ENCODE measurements at regions of chr2 and their contacts with region 1.

Region 1: GRCh38 chr2:210002158-210003157 is at the start of gene RPE:
- DNase-seq: peak; percentile 76
- ATAC-seq: peak; percentile 96
- H3K4me3 ChIP-seq: peak within 1 kb of the TSS; percentile 92
- H3K27ac ChIP-seq: peak within 1 kb of the TSS; percentile 82
- H3K4me1 ChIP-seq: peaks cover 10% of the 10 kb centered on the region
- H3K27me3 ChIP-seq: no peaks in the 10 kb centered on the region
- CTCF ChIP-seq: no peak
- EP300 ChIP-seq: no peak
- POLR2A ChIP-seq: peak; percentile 86
- RAD21 ChIP-seq: no peak
- polyA plus RNA-seq, gene RPE: 45.9 to 49.8 TPM

Region 2: DNA sequence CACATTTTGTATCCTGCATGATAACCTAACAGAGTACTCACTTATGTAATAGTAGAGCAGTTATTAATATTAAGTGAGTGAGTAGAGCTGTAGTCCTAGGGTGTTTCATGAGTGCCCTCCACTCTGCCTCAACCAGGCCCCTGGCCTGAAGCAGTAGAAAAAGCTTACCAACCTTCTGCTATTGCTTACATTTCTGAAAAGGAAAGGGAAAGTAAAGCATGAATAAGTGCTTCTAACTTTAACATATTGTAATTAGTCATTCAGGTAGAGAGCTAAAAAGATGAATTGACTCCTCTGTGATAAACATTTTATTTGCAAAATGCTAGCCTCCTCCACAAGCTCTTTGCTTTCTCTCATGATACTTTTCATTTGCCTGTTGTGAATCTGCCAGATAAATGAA is 94.7 kb before region 1 on chr2:
- CTCF ChIA-PET with region 1: no interaction called
- POLR2A ChIA-PET with region 1: no interaction called
- RAD21 ChIA-PET with region 1: no interaction called
- SMC1A ChIA-PET with region 1: no interaction called
- in situ Hi-C with region 1: no loop called
- intact Hi-C with region 1: no loop called
- DNase-seq: no peak
- ATAC-seq: no peak
- H3K4me3 ChIP-seq: no peak overlapping the region
- H3K27ac ChIP-seq: no peak overlapping the region
- H3K4me1 ChIP-seq: no peaks in the 10 kb centered on the region
- H3K27me3 ChIP-seq: no peaks in the 10 kb centered on the region
- CTCF ChIP-seq: no peak
- EP300 ChIP-seq: no peak
- POLR2A ChIP-seq: no peak
- RAD21 ChIP-seq: no peak

Region 3: DNA sequence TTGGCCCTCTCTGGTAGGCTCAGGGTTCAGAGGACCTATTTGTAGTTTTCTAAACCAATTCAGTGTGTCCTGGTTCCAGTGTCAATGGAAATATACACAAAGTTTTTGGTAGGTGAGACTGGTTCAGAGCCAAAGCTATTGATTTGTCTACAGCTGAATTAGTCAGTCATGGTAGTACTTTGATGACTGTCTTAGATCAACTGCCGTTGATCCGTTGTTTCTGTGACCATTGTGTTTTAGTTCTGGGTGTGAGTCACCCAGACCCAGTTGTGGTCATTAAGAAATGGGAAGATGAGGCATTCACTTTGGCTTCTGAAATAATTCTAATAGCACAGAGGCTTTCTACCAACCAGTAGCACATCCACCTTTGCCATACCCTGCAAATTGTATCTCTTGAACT is 16.0 kb before region 1 on chr2:
- CTCF ChIA-PET with region 1: interaction called, 3 read pairs
- POLR2A ChIA-PET with region 1: no interaction called
- RAD21 ChIA-PET with region 1: no interaction called
- SMC1A ChIA-PET with region 1: interaction called, 11 read pairs
- in situ Hi-C with region 1: no loop called
- intact Hi-C with region 1: no loop called
- DNase-seq: no peak
- ATAC-seq: no peak
- H3K4me3 ChIP-seq: no peak overlapping the region
- H3K27ac ChIP-seq: no peak overlapping the region
- H3K4me1 ChIP-seq: no peaks in the 10 kb centered on the region
- H3K27me3 ChIP-seq: no peaks in the 10 kb centered on the region; a peak in 2 of 4 replicates
- CTCF ChIP-seq: no peak
- EP300 ChIP-seq: no peak
- POLR2A ChIP-seq: no peak
- RAD21 ChIP-seq: no peak

Region 4: DNA sequence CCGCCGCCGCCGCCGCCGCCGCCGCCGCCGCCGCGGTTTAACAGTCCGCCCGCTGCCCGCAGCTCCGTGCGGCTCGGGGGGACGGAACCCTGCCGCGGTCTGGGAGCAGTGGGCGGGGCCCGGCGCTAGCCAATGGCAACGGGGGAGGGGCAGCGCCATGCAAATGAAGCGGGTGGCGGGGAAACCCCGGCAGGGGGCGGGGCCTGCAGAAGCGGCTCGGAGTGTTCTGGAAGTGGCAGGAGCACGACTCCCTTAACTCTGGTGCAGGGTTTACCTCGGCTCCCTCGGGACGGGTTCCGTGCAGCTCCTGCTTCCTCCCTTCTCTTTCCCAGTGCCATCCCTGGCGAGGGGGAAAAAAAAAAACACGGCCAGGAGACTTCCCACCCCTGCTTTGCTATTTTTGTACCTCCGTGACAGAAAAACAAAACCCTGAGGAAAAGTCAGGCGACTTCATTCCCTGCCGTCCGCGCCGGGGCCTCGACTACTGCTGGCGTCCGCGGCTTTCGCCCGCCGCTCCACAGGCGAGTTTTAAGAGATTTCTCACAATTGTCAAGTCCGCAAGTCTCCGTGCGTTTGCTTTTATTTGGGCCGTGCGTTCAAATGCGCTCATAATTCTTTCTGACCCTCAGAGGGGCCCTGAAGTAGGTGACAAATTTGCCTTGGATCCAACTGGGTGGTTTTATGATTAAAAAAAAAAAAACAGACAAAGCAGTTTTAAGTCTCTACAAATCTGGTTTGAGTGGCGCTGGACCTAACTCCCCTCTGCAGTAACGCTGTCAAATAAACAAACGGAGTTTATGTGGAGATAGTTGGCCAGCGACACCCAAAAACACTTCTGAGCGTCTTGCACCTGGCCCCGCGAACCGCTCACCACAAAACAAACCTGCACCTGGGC is 169.1 kb after region 1 on chr2 and contains the start of gene KANSL1L:
- CTCF ChIA-PET with region 1: no interaction called
- POLR2A ChIA-PET with region 1: no interaction called
- RAD21 ChIA-PET with region 1: interaction called, 4 read pairs
- SMC1A ChIA-PET with region 1: interaction called, 3 read pairs
- in situ Hi-C with region 1: loop called (anchors 10 kb)
- intact Hi-C with region 1: loop called (anchors 2 kb)
- DNase-seq: peak; percentile 66
- ATAC-seq: peak; percentile 80
- H3K4me3 ChIP-seq: peak within 1 kb of the TSS; percentile 96
- H3K27ac ChIP-seq: peak within 1 kb of the TSS; percentile 89
- H3K4me1 ChIP-seq: no peaks in the 10 kb centered on the region
- H3K27me3 ChIP-seq: no peaks in the 10 kb centered on the region
- CTCF ChIP-seq: no peak
- EP300 ChIP-seq: no peak
- POLR2A ChIP-seq: peak; percentile 72
- RAD21 ChIP-seq: no peak
- polyA plus RNA-seq, gene KANSL1L: 1.2 to 1.8 TPM

Region 5: GRCh38 chr2:210252699-210253606 is 250.5 kb after region 1 on chr2:
- CTCF ChIA-PET with region 1: no interaction called
- POLR2A ChIA-PET with region 1: no interaction called
- RAD21 ChIA-PET with region 1: no interaction called
- SMC1A ChIA-PET with region 1: no interaction called
- in situ Hi-C with region 1: no loop called
- intact Hi-C with region 1: no loop called
- DNase-seq: no peak
- ATAC-seq: peak; percentile 19; the same call in 2 of the 3 replicates
- H3K4me3 ChIP-seq: no peak overlapping the region
- H3K27ac ChIP-seq: no peak overlapping the region
- H3K4me1 ChIP-seq: no peaks in the 10 kb centered on the region
- H3K27me3 ChIP-seq: no peaks in the 10 kb centered on the region
- CTCF ChIP-seq: no peak
- EP300 ChIP-seq: no peak
- POLR2A ChIP-seq: no peak
- RAD21 ChIP-seq: no peak

Region 6: DNA sequence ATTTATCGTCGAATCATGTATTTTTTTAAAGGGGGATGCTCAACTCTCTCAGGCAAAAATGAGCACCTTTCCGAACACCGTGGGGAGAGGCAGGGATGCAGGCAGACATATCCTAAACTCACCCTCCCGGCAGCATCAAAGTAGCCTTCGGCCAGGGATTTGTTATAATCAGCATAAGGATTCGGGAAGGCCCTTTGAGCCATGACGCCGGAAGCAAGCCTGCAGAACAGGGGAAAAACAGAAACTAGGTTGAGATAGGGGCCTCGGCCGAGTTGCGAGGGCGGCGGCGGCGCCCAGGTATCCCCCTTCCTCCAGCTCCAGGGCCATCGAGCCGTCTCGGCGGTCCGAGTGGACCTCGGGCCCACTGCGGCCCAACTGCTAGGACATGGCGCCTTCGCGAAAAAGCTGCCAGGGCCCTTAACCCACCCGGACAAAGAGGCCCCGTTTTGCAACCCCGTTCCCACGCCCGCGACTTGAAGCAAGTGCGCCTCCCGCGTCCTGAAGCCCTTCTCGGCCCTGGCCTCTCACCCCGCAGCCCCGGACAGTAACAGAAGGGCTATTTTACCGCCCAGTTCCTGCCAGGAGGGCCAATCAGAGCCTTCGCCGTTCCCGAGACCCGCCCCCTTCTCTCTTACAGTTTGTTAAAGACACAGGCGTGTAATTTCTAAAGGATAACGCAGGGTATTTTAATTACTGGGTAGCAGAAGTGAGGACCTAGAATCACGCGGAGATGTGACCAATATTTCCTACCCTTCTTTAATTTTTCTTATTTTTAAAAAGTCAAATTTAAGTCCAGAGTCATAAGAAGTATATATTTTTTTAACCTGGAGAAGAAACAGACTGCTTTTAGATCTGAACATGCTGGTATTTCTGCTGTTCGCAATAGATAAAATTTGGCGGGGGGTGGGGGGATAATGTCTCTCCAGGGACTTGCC is 474.0 kb after region 1 on chr2 and contains the start of gene LANCL1:
- CTCF ChIA-PET with region 1: no interaction called
- POLR2A ChIA-PET with region 1: no interaction called
- RAD21 ChIA-PET with region 1: no interaction called
- SMC1A ChIA-PET with region 1: no interaction called
- in situ Hi-C with region 1: no loop called
- intact Hi-C with region 1: loop called (anchors 10 kb)
- DNase-seq: peak; percentile 67
- ATAC-seq: peak; percentile 100
- H3K4me3 ChIP-seq: peak within 1 kb of the TSS; percentile 90
- H3K27ac ChIP-seq: peak within 1 kb of the TSS; percentile 80
- H3K4me1 ChIP-seq: no peaks in the 10 kb centered on the region
- H3K27me3 ChIP-seq: no peaks in the 10 kb centered on the region
- CTCF ChIP-seq: no peak; a peak in 1 of 6 replicates
- EP300 ChIP-seq: no peak
- POLR2A ChIP-seq: peak; percentile 90
- RAD21 ChIP-seq: no peak
- polyA plus RNA-seq, gene LANCL1: 13.6 to 18.4 TPM

Region 7: GRCh38 chr2:210553371-210553770 is 550.9 kb after region 1 on chr2:
- CTCF ChIA-PET with region 1: no interaction called
- POLR2A ChIA-PET with region 1: no interaction called
- RAD21 ChIA-PET with region 1: no interaction called
- SMC1A ChIA-PET with region 1: no interaction called
- in situ Hi-C with region 1: no loop called
- intact Hi-C with region 1: no loop called
- DNase-seq: no peak
- ATAC-seq: no peak
- H3K4me3 ChIP-seq: no peak overlapping the region
- H3K27ac ChIP-seq: no peak overlapping the region
- H3K4me1 ChIP-seq: no peaks in the 10 kb centered on the region
- H3K27me3 ChIP-seq: no peaks in the 10 kb centered on the region
- CTCF ChIP-seq: no peak
- EP300 ChIP-seq: no peak
- POLR2A ChIP-seq: no peak
- RAD21 ChIP-seq: no peak

Measured in GM12878 (cell line).